ENCODE measurements at regions of chr17 and their contacts with region 1.

Region 1: GRCh38 chr17:64320613-64321553 is 57.8 kb upstream of the TEX2 start:
- DNase-seq: peak in 1 of 2 donors; percentile 76
- ATAC-seq: peak; percentile 57 to 83 (median 78)
- H3K4me3 ChIP-seq: peak overlapping the region in 2 of 10 donors; percentile 10
- H3K27ac ChIP-seq: peak overlapping the region in 8 of 10 donors; percentile 10 to 76 (median 46)
- H3K4me1 ChIP-seq: peaks cover under 1 to 65% (median 32%) of the 10 kb centered on the region in 9 donors
- H3K27me3 ChIP-seq: no peaks in the 10 kb centered on the region
- CTCF ChIP-seq: peak; percentile 61 to 86 (median 78)

Region 2: GRCh38 chr17:64373722-64374121 is 52.8 kb after region 1 on chr17:
- intact Hi-C with region 1: no loop called
- DNase-seq: no peak
- ATAC-seq: peak in 5 of 8 donors; percentile 47 to 62 (median 52)
- H3K4me3 ChIP-seq: no peak overlapping the region
- H3K27ac ChIP-seq: peak overlapping the region in 4 of 10 donors; percentile 27 to 39 (median 29)
- H3K4me1 ChIP-seq: peaks cover 0 to 40% (median 18%) of the 10 kb centered on the region in 9 donors
- H3K27me3 ChIP-seq: no peaks in the 10 kb centered on the region
- CTCF ChIP-seq: no peak

Region 3: DNA sequence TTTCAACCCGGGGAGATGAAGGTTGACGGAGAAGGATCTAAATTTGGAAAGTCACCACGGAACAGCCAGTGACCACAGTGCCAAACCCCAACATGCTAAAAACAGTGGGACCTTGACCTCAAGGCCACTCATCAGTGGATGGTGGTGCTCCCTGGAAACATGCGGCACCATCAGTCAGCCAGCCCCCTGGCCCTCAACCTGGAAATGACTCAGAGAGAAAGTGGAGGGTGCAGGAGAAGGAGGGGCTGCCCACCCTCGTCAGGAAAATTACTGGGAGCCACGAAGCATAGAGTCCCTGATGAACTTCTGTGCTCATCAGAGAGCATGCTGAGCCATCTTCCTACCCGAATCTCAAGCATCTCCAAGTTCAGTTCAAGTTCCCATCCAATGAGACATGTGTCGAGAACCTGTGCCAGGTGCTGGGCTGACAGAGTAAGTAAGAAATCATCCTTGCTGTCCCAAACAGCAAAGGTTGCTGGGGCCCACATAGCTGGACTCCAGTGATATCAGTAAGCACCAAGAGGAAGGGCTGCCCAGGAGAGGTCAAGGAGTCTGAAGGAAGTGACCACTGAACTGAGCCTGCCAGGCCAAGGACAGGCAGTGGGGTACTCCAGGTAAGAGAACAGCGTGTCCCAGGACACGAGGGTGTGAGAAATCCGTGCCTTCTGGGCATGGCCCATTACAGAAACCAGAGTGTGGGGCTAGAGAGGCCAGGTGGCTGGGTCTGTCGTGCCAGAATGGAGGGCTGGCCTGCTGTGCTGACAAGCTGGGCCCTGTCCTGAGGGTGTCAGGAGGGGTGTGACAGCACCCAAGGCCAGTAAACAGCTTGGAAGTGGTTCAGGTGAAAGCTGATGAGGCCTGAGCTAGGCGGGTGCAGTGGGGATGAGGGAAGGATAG is 64.6 kb after region 1 on chr17:
- intact Hi-C with region 1: loop called in 1 of 10 experiments (anchors 10 kb)
- DNase-seq: peak; percentile 31 to 67
- ATAC-seq: peak; percentile 53 to 89 (median 75)
- H3K4me3 ChIP-seq: peak overlapping the region in 8 of 10 donors; percentile 0 to 58 (median 50)
- H3K27ac ChIP-seq: peak overlapping the region; percentile 54 to 89 (median 85)
- H3K4me1 ChIP-seq: peaks cover 7 to 97% (median 56%) of the 10 kb centered on the region in 9 donors
- H3K27me3 ChIP-seq: no peaks in the 10 kb centered on the region
- CTCF ChIP-seq: no peak

Region 4: DNA sequence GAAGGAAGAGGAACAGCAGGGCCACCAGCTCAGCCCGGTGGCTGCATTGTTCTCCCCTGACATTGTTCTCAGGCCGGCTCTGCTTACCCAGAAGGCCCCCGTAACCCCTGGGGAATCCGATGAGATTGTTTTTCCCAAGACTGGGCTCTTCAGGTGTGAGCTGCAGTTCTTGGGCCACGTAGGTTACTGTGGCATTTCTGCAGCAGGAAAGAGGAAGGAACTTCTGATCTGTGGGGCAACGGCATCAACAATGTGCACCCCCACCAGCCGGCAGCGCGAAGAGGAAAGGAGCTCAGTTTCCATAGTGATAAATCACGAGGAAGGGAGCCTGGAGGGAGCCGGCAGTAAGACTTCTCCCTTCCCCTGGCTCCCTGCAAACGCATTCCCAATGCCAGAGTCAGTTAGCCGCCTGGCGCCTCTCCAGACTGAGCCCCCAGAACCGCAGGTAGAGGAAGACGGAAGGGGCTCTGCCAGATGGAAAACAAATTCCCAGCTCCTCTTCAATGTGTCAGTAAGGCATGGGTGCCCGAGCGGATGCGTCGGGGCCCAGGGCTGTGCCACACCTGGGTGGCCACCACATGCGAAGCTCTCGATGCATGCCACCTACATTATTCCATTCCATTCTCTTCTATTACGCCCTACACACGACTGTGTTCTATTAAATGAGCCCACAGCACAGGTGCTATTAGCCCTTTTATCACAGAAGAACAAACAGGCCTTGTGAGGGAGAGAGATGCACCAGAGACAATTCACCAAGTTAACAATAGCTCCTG is 91.3 kb after region 1 on chr17:
- intact Hi-C with region 1: loop called in 6 of 10 experiments (anchors 2 to 5 kb)
- DNase-seq: peak; percentile 56 to 73
- ATAC-seq: peak; percentile 75 to 87 (median 85)
- H3K4me3 ChIP-seq: peak overlapping the region in 6 of 10 donors; percentile 30 to 39 (median 36)
- H3K27ac ChIP-seq: peak overlapping the region in 9 of 10 donors; percentile 33 to 82 (median 72)
- H3K4me1 ChIP-seq: peaks cover 0 to 48% (median 22%) of the 10 kb centered on the region in 9 donors
- H3K27me3 ChIP-seq: no peaks in the 10 kb centered on the region
- CTCF ChIP-seq: no peak

Region 5: GRCh38 chr17:64491034-64491859 is 170.4 kb after region 1 on chr17:
- intact Hi-C with region 1: loop called in 3 of 10 experiments (anchors 5 to 10 kb)
- DNase-seq: peak in 1 of 2 donors; percentile 32
- ATAC-seq: peak in 3 of 8 donors; percentile 54 to 58 (median 55)
- H3K4me3 ChIP-seq: no peak overlapping the region
- H3K27ac ChIP-seq: no peak overlapping the region
- H3K4me1 ChIP-seq: peaks cover 0 to 29% (median 25%) of the 10 kb centered on the region in 9 donors
- H3K27me3 ChIP-seq: no peaks in the 10 kb centered on the region
- CTCF ChIP-seq: peak in 8 of 9 donors; percentile 17 to 75 (median 53)

Region 6: GRCh38 chr17:64496786-64497564 is 176.1 kb after region 1 on chr17 and contains the start of gene POLG2:
- intact Hi-C with region 1: loop called in 3 of 10 experiments (anchors 5 to 10 kb)
- DNase-seq: peak; percentile 92 to 94
- ATAC-seq: peak; percentile 94 to 98 (median 97)
- H3K4me3 ChIP-seq: peak within 1 kb of the TSS; percentile 42 to 85 (median 76)
- H3K27ac ChIP-seq: peak within 1 kb of the TSS; percentile 39 to 91 (median 82)
- H3K4me1 ChIP-seq: peaks cover 13 to 80% (median 69%) of the 10 kb centered on the region in 9 donors
- H3K27me3 ChIP-seq: no peaks in the 10 kb centered on the region
- CTCF ChIP-seq: peak in 7 of 9 donors; percentile 16 to 54 (median 49)
- total RNA-seq, gene POLG2: 5.1 to 11.1 (median 6.5) TPM

Measured in heart right ventricle (tissue), 16 donors.